BJ (cell line): ENCODE measurements at regions of chr11 and their contacts with region 1.

Region 1: GRCh38 chr11:95089620-95090542 is at the start of gene ENDOD1:
- DNase-seq: no peak
- H3K4me3 ChIP-seq: peak within 1 kb of the TSS; percentile 69
- H3K27me3 ChIP-seq: no peaks in the 10 kb centered on the region; the same call in 1 of the 2 replicates
- CTCF ChIP-seq: peak; percentile 24; the same call in 1 of the 2 replicates
- polyA plus RNA-seq, gene ENDOD1: 11.0 and 13.6 TPM in 2 replicates

Region 2: DNA sequence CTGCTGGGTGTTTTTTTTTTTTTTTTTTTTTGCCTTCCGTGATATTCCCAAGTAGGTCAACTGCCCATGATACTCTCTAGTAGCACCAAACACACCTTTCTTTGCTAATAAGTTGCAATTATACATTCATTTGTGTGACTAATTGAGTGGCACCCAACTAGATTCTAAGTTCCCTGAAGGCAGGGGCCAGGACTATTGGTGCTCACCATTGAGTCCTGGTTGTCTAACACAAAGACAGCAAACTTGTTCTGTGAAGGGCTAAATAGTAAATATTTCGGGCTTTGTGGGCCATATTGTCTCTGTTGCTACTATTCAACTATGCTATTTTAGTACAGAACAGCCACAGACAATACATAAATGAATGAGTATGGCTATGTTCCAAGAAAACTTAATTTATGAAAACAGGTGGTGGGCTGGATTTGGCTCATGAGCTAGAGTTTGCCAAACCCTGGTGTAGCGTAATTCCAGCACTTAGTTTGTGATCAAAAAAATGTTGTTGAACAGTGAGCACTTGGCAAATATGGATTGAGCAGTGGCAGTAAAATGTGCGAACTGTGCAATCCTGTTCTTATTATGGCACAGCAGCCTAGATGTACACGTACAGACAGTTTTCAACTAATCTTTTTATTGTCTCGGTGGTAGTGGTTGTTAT is 11.1 kb after region 1 on chr11:
- CTCF ChIA-PET with region 1: interaction called, 12 read pairs
- POLR2A ChIA-PET with region 1: no interaction called
- DNase-seq: no peak
- H3K4me3 ChIP-seq: no peak overlapping the region
- H3K27me3 ChIP-seq: no peaks in the 10 kb centered on the region
- CTCF ChIP-seq: no peak

Region 3: DNA sequence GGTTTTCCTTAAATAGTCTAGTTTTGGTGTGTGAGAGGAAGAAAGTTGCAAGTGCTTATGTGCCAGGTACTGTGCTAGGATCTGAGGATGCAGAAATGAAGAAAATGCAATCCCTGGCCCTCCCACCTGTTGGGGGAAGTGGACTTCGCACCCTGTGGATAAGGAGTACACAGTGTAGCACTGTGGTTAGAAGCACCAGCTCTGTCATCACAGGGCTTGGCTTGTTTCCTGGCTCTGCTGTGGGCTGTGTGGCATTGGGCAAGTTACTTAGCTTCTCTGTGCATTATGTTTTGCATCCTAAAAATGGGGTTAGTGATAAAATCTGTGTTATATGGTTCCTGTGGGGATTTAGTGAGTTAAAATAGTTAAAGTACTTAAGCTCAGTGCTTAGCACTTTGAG is 67.9 kb after region 1 on chr11:
- CTCF ChIA-PET with region 1: no interaction called
- POLR2A ChIA-PET with region 1: no interaction called
- DNase-seq: no peak
- H3K4me3 ChIP-seq: no peak overlapping the region
- H3K27me3 ChIP-seq: peaks cover 5% of the 10 kb centered on the region
- CTCF ChIP-seq: no peak